GM12878 (cell line): ENCODE measurements at regions of chr3 and their contacts with region 1.

Region 1: DNA sequence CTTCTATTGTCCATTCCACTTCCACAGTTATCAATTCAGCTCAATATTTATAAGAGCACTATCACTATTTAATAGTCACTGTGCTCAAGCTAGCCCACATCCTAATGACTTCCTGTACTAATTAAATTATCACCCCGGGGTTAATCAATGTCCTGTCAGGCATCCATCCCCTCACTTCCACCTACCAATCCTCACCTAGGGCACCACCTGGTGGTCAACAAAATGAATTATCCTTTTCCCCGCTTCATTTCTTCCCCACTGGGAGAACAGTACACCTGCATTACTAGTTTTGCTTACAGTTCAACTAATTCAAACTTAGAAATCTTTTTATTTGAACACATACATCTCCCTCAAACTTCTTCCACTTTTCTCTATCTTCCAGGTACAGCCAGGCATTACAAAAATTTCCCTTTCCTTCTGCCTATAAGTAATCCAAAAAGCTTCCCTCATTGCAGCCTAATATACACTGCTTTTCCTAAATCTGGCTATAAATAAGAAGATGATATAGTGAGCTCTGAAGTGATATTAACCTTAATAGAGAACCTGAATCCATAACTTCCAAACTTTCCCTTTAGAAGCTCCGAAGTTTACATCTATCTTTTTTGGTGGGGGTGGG is 68.5 kb downstream of the TMCC1 start:
- DNase-seq: peak; percentile 20
- ATAC-seq: peak; percentile 86
- H3K4me3 ChIP-seq: no peak overlapping the region
- H3K27ac ChIP-seq: no peak overlapping the region
- H3K4me1 ChIP-seq: peaks cover 20% of the 10 kb centered on the region; the same call in 1 of the 2 replicates
- H3K27me3 ChIP-seq: no peaks in the 10 kb centered on the region
- CTCF ChIP-seq: peak; percentile 59 to 76 (median 63); a peak in 5 of 6 replicates
- EP300 ChIP-seq: no peak
- POLR2A ChIP-seq: no peak
- RAD21 ChIP-seq: peak; percentile 89

Region 2: DNA sequence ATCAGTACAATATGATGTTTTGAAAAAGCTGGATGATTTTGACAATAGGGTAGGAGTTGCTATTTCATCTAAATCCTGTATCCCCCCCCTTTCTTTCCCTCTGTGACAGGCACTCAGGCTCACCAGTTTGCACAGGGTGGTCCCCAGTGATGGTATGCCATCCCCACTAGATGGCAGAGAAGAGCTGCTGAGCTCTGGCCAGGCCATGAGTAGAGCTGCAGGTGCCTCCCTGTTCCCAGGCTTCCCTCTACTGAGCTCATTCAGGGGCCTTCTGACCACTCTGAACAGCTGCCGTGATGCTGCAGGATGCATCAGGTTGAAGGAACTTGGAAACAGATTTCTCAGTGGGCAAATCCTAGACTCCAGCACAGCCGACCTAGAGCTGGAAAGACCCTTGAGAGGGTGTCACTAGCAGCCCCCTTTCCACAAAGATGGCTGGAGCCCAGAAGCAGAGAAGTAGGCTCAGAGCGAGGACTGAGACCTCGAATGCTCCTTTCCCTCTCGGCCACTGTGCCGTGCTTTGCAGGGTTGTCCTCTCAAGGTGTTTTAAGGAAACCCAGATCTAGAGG is 441.7 kb before region 1 on chr3:
- CTCF ChIA-PET with region 1: interaction called, 5 read pairs
- POLR2A ChIA-PET with region 1: no interaction called
- RAD21 ChIA-PET with region 1: interaction called, 4 read pairs
- SMC1A ChIA-PET with region 1: interaction called, 5 read pairs
- in situ Hi-C with region 1: no loop called
- intact Hi-C with region 1: loop called (anchors 5 kb)
- DNase-seq: no peak
- ATAC-seq: peak; percentile 99
- H3K4me3 ChIP-seq: no peak overlapping the region
- H3K27ac ChIP-seq: no peak overlapping the region
- H3K4me1 ChIP-seq: no peaks in the 10 kb centered on the region
- H3K27me3 ChIP-seq: no peaks in the 10 kb centered on the region
- CTCF ChIP-seq: peak; percentile 85 to 89 (median 86)
- EP300 ChIP-seq: no peak
- POLR2A ChIP-seq: no peak
- RAD21 ChIP-seq: peak; percentile 85

Region 3: DNA sequence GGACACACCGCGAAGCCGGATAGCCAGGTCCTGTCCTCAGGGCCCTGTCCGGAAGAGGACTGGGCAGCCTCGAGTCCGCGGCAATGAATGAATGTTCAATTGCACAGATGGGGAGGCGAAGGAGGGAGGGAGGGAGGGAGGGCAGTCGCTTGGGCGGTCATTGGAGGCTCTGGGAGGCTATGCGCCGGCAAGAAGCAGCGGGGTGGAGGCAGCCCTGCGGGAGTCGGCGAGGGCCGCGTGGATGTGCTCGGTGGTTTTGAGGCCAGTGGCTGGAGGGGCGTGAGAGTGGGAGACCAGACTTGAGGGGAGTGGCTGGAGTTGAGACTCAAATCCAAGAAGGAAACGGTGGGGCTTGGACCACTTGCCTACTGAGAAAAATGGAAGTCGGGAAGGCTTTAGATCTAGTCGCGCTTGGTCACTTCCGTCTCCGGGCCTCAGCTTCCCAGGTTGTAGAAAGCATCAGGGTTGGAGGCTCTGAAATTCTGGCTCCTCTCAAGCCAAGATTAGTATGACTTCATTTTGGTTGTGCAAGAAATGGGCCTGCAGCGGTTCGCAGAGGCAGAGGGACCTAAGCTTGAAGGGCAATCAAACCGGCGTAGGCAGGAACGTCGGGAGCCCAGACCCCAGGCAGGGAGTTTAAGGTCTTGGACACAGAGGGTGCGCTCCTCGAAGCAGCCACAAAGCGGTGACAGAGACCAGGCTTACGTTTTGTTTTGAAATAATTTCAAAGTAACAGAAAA is 197.4 kb before region 1 on chr3:
- CTCF ChIA-PET with region 1: interaction called, 30 read pairs
- POLR2A ChIA-PET with region 1: no interaction called
- RAD21 ChIA-PET with region 1: interaction called, 6 read pairs
- SMC1A ChIA-PET with region 1: interaction called, 5 read pairs
- in situ Hi-C with region 1: no loop called
- intact Hi-C with region 1: loop called (anchors 1 kb)
- DNase-seq: peak; percentile 45
- ATAC-seq: peak; percentile 68
- H3K4me3 ChIP-seq: peak overlapping the region; percentile 84
- H3K27ac ChIP-seq: peak overlapping the region; percentile 65
- H3K4me1 ChIP-seq: no peaks in the 10 kb centered on the region; the same call in 1 of the 2 replicates
- H3K27me3 ChIP-seq: no peaks in the 10 kb centered on the region; a peak in 1 of 4 replicates
- CTCF ChIP-seq: peak; percentile 85 to 92 (median 90)
- EP300 ChIP-seq: no peak
- POLR2A ChIP-seq: no peak
- RAD21 ChIP-seq: peak; percentile 90

Region 4: DNA sequence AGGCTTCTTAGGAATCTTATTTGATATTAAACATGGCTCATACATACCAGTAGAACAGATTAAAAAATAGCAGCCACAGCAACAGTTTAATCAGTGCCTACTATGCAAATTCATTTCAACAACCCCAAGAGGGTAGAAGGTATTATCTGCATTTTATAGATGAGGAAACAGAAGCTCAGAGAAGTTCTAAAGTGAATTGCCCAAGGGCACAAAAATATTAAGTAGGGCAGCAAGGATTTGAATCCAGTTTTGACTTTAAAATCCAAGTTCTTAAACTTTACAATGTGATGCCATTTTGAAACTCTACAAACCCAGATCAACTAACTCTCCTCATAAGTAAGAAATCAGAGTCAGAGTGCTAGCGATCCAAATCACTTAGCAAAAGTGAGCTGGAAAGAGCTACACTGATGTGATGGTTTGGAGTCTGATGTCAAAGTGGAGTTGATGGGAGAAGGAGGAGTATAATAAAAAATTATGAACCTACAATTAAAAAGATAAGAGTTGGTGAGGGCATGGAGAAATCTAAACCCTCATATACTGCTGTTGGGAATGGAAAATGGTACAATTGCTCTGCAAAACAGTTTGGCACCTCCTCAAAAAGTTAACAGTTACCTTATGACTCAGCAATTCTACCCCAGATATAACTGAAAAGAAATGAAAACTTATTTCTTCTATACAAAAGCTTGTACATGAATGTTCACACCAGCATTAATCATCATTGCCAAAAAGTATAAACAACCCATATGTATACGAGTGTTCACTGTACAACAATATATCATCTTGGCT is 167.6 kb before region 1 on chr3:
- CTCF ChIA-PET with region 1: interaction called, 23 read pairs
- POLR2A ChIA-PET with region 1: no interaction called
- RAD21 ChIA-PET with region 1: interaction called, 6 read pairs
- SMC1A ChIA-PET with region 1: interaction called, 12 read pairs
- in situ Hi-C with region 1: loop called (anchors 5 kb)
- intact Hi-C with region 1: no loop called
- DNase-seq: no peak
- ATAC-seq: peak; percentile 51
- H3K4me3 ChIP-seq: no peak overlapping the region
- H3K27ac ChIP-seq: no peak overlapping the region
- H3K4me1 ChIP-seq: peaks cover 11% of the 10 kb centered on the region; the same call in 1 of the 2 replicates
- H3K27me3 ChIP-seq: no peaks in the 10 kb centered on the region
- CTCF ChIP-seq: no peak
- EP300 ChIP-seq: no peak
- POLR2A ChIP-seq: no peak
- RAD21 ChIP-seq: no peak

Region 5: GRCh38 chr3:129809297-129809696 is 15.7 kb before region 1 on chr3:
- CTCF ChIA-PET with region 1: interaction called, 27 read pairs
- POLR2A ChIA-PET with region 1: no interaction called
- RAD21 ChIA-PET with region 1: interaction called, 4 read pairs
- SMC1A ChIA-PET with region 1: interaction called, 9 read pairs
- in situ Hi-C with region 1: no loop called
- intact Hi-C with region 1: no loop called
- DNase-seq: no peak
- ATAC-seq: no peak
- H3K4me3 ChIP-seq: no peak overlapping the region
- H3K27ac ChIP-seq: no peak overlapping the region
- H3K4me1 ChIP-seq: no peaks in the 10 kb centered on the region
- H3K27me3 ChIP-seq: no peaks in the 10 kb centered on the region
- CTCF ChIP-seq: no peak
- EP300 ChIP-seq: no peak
- POLR2A ChIP-seq: no peak
- RAD21 ChIP-seq: no peak

Region 6: GRCh38 chr3:129893581-129894070 is 68.6 kb after region 1 on chr3 and contains the start of gene TMCC1:
- CTCF ChIA-PET with region 1: interaction called, 4 read pairs
- POLR2A ChIA-PET with region 1: no interaction called
- RAD21 ChIA-PET with region 1: interaction called, 3 read pairs
- SMC1A ChIA-PET with region 1: interaction called, 3 read pairs
- in situ Hi-C with region 1: no loop called
- intact Hi-C with region 1: loop called (anchors 5 kb)
- DNase-seq: peak; percentile 58
- ATAC-seq: peak; percentile 83
- H3K4me3 ChIP-seq: peak within 1 kb of the TSS; percentile 77
- H3K27ac ChIP-seq: peak within 1 kb of the TSS; percentile 95
- H3K4me1 ChIP-seq: peaks cover 22% of the 10 kb centered on the region
- H3K27me3 ChIP-seq: no peaks in the 10 kb centered on the region
- CTCF ChIP-seq: no peak
- EP300 ChIP-seq: no peak
- POLR2A ChIP-seq: no peak; the same call in 1 of the 2 replicates
- RAD21 ChIP-seq: no peak
- polyA plus RNA-seq, gene TMCC1: 2.3 to 3.1 TPM